ENCODE measurements at regions of chr17 and their contacts with region 1.

Region 1: GRCh38 chr17:49370971-49371834 is 9.2 kb upstream of the ZNF652 start:
- DNase-seq: no peak
- ATAC-seq: no peak
- H3K4me3 Mint-ChIP-seq: no peak overlapping the region
- H3K27ac Mint-ChIP-seq: no peak overlapping the region
- H3K4me1 Mint-ChIP-seq: peaks cover 2% of the 10 kb centered on the region
- H3K27me3 Mint-ChIP-seq: no peaks in the 10 kb centered on the region
- CTCF ChIP-seq: no peak

Region 2: GRCh38 chr17:49327835-49328784 is 43.1 kb before region 1 on chr17:
- CTCF ChIA-PET with region 1: interaction called, 22 read pairs
- POLR2A ChIA-PET with region 1: no interaction called
- intact Hi-C with region 1: no loop called
- DNase-seq: no peak
- ATAC-seq: peak; percentile 69
- H3K4me3 Mint-ChIP-seq: no peak overlapping the region
- H3K27ac Mint-ChIP-seq: no peak overlapping the region
- H3K4me1 Mint-ChIP-seq: peaks cover 33% of the 10 kb centered on the region
- H3K27me3 Mint-ChIP-seq: no peaks in the 10 kb centered on the region
- CTCF ChIP-seq: no peak

Region 3: DNA sequence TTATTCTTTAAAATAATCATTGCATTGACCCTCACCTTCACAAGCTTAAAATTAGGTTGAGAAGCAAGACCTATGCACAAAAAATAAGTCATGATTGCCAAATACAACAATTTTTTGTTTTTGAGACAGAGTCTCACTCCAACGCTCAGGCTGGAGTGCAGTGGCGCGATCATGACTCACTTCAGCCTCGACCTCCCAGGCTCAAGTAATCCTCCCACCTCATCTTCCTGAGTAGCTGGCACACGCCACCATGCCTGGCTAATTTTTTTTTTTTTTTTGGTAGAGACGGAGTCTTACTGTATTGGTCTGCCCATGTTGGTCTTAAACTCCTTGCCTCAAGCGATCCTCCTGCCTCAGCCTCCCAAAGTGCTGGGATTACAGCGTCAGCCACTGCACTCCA is 33.3 kb before region 1 on chr17:
- CTCF ChIA-PET with region 1: interaction called, 24 read pairs
- POLR2A ChIA-PET with region 1: interaction called, 3 read pairs
- intact Hi-C with region 1: no loop called
- DNase-seq: peak; percentile 55
- ATAC-seq: peak; percentile 8
- H3K4me3 Mint-ChIP-seq: no peak overlapping the region
- H3K27ac Mint-ChIP-seq: peak overlapping the region; percentile 71
- H3K4me1 Mint-ChIP-seq: peaks cover 55% of the 10 kb centered on the region
- H3K27me3 Mint-ChIP-seq: no peaks in the 10 kb centered on the region
- CTCF ChIP-seq: no peak

Region 4: DNA sequence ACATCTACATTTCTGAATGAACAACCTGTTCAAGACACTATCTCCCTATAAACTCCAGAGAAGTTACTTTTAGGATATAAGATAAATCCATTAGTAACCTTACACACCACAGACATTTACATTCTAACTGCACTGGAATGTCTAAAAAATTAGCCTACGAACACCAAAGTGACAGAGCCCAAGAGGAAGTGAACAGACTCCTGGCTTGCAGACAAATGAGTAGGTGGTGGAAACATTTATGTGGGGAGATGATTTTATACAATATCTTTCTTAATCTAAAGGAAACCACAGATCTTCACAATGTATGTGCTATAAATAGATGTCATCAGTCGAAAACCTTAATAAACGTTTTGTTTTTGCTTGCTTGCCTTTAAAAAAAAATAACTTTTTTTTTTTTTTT is 27.9 kb before region 1 on chr17:
- CTCF ChIA-PET with region 1: interaction called, 24 read pairs
- POLR2A ChIA-PET with region 1: interaction called, 3 read pairs
- intact Hi-C with region 1: no loop called
- DNase-seq: peak; percentile 50
- ATAC-seq: peak; percentile 31
- H3K4me3 Mint-ChIP-seq: peak overlapping the region; percentile 73
- H3K27ac Mint-ChIP-seq: peak overlapping the region; percentile 94
- H3K4me1 Mint-ChIP-seq: peaks cover 73% of the 10 kb centered on the region
- H3K27me3 Mint-ChIP-seq: no peaks in the 10 kb centered on the region
- CTCF ChIP-seq: no peak

Region 5: GRCh38 chr17:49390548-49391324 is 19.5 kb after region 1 on chr17:
- CTCF ChIA-PET with region 1: interaction called, 81 read pairs
- POLR2A ChIA-PET with region 1: interaction called, 4 read pairs
- intact Hi-C with region 1: no loop called
- DNase-seq: peak; percentile 15
- ATAC-seq: no peak
- H3K4me3 Mint-ChIP-seq: no peak overlapping the region
- H3K27ac Mint-ChIP-seq: peak overlapping the region; percentile 87
- H3K4me1 Mint-ChIP-seq: peaks cover 56% of the 10 kb centered on the region
- H3K27me3 Mint-ChIP-seq: no peaks in the 10 kb centered on the region
- CTCF ChIP-seq: no peak

Region 6: DNA sequence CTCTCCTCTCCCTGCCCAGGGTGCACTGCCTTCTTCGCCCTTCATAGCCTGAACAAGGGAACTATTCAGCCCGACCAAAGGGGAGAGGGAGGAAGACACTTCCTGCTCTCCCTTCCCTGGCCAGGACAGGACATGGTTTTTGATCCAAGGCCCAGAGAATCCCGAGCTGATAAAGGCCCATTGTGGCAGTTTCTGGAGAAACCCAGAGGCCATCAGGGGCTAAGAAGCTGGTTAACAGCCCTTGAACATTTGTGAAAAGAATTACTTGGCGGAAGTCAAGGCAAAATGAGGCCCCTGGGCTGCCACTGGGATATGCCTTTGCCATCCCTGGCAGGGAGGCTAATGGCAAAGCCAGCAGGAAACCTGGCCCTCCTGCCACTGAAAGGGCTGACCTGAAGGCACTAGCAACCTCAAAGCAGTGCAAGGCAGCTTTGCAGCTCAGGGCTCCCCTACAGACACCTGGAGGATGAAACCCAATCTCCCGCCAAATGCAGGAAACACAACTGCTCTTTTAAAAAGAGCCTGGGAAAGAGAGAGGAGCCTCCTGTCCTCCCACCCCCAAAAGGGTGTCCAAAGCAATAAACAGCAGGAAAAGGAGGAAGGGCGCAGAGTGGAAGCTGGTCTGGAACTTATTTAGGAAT is 30.9 kb after region 1 on chr17:
- CTCF ChIA-PET with region 1: interaction called, 18 read pairs
- POLR2A ChIA-PET with region 1: interaction called, 3 read pairs
- intact Hi-C with region 1: no loop called
- DNase-seq: no peak
- ATAC-seq: no peak
- H3K4me3 Mint-ChIP-seq: no peak overlapping the region
- H3K27ac Mint-ChIP-seq: no peak overlapping the region
- H3K4me1 Mint-ChIP-seq: peaks cover 21% of the 10 kb centered on the region
- H3K27me3 Mint-ChIP-seq: no peaks in the 10 kb centered on the region
- CTCF ChIP-seq: no peak

Region 7: GRCh38 chr17:50079334-50080095 is 708.3 kb after region 1 on chr17:
- CTCF ChIA-PET with region 1: no interaction called
- POLR2A ChIA-PET with region 1: no interaction called
- intact Hi-C with region 1: no loop called
- DNase-seq: peak; percentile 42
- ATAC-seq: peak; percentile 51
- H3K4me3 Mint-ChIP-seq: no peak overlapping the region
- H3K27ac Mint-ChIP-seq: no peak overlapping the region
- H3K4me1 Mint-ChIP-seq: no peaks in the 10 kb centered on the region
- H3K27me3 Mint-ChIP-seq: no peaks in the 10 kb centered on the region
- CTCF ChIP-seq: no peak